ENCODE measurements at regions of chr11 and their contacts with region 1.

Region 1: GRCh38 chr11:125141686-125142535 is 22.6 kb upstream of the PKNOX2 start:
- DNase-seq: no peak
- H3K4me3 ChIP-seq: no peak overlapping the region
- H3K27ac ChIP-seq: no peak overlapping the region
- H3K4me1 ChIP-seq: no peaks in the 10 kb centered on the region
- H3K27me3 ChIP-seq: no peaks in the 10 kb centered on the region
- CTCF ChIP-seq: peak; percentile 81 to 97

Region 2: GRCh38 chr11:124946735-124947141 is 195.2 kb before region 1 on chr11:
- CTCF ChIA-PET with region 1: no interaction called
- dilution Hi-C with region 1: no loop called
- in situ Hi-C with region 1: no loop called
- intact Hi-C with region 1: no loop called
- DNase-seq: peak; percentile 86
- H3K4me3 ChIP-seq: no peak overlapping the region
- H3K27ac ChIP-seq: peak overlapping the region; percentile 80
- H3K4me1 ChIP-seq: peaks cover 18% of the 10 kb centered on the region
- H3K27me3 ChIP-seq: no peaks in the 10 kb centered on the region
- CTCF ChIP-seq: no peak

Region 3: GRCh38 chr11:124970925-124971324 is 171.0 kb before region 1 on chr11:
- CTCF ChIA-PET with region 1: interaction called, 7 read pairs
- dilution Hi-C with region 1: no loop called
- in situ Hi-C with region 1: loop called (anchors 5 to 10 kb)
- intact Hi-C with region 1: loop called (anchors 1 kb)
- DNase-seq: peak; percentile 46
- H3K4me3 ChIP-seq: no peak overlapping the region
- H3K27ac ChIP-seq: no peak overlapping the region
- H3K4me1 ChIP-seq: no peaks in the 10 kb centered on the region
- H3K27me3 ChIP-seq: no peaks in the 10 kb centered on the region
- CTCF ChIP-seq: peak; percentile 10 to 49

Region 4: DNA sequence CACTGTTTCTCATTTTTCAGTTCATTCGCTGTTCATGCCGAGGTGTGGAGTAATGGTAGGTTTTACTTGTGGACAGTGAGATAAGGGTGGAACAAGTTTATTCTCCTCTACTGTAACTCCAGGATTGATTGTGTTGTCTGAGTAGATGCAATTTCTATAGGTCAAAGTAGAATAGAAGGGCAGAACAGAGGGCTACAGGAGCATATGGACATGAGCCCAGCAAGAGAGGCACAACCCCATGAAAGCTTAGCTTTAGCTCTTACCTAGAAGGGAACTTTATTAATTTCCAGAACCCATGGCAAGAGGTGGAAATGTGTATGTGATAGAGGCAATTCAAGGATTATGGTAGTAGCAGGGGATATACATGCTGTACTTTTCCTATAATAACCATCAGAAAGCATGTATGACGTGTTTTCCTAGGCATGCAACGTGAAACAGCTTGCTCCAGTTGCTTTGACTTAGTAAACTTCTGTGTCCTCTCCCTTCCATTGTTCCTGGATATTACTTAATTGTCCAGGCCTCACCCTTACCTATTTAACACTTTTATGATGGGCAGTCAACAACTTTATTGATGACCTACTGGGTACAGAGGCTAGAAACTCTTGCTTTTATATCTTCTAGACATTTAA is 92.6 kb before region 1 on chr11:
- CTCF ChIA-PET with region 1: no interaction called
- dilution Hi-C with region 1: no loop called
- in situ Hi-C with region 1: no loop called
- intact Hi-C with region 1: no loop called
- DNase-seq: no peak
- H3K4me3 ChIP-seq: no peak overlapping the region
- H3K27ac ChIP-seq: no peak overlapping the region
- H3K4me1 ChIP-seq: peaks cover 5% of the 10 kb centered on the region
- H3K27me3 ChIP-seq: no peaks in the 10 kb centered on the region
- CTCF ChIP-seq: no peak

Region 5: DNA sequence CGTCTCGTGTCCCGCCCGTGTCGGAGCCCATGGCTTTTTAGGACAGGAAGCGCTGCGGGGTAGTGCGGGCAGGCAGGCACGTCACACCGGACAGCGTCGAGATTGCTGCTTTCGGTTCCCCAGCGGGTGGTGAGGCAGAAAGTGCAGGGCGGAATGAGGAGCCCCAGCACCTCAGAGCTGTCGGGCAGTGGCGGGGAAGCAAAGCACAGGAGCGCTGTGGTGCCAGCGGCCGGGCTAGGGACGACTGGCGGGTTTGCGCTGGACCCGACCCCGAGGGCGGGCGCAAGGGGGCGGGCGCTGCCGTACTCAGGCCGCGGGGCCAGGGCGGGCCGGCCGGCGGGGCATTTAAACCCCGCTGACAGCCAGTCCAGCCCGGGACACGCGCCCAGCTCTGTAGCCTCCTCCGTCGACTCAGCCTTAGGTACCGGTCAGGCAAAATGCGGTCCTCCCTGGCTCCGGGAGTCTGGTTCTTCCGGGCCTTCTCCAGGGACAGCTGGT is 78.9 kb before region 1 on chr11 and contains the start of gene SLC37A2:
- CTCF ChIA-PET with region 1: interaction called, 6 read pairs
- dilution Hi-C with region 1: no loop called
- in situ Hi-C with region 1: no loop called
- intact Hi-C with region 1: loop called (anchors 5 kb)
- DNase-seq: peak; percentile 81
- H3K4me3 ChIP-seq: peak within 1 kb of the TSS; percentile 59 to 75 (median 63)
- H3K27ac ChIP-seq: peak within 1 kb of the TSS; percentile 69
- H3K4me1 ChIP-seq: peaks cover 8% of the 10 kb centered on the region
- H3K27me3 ChIP-seq: no peaks in the 10 kb centered on the region
- CTCF ChIP-seq: peak in 1 of 2 donors; percentile 19
- total RNA-seq, gene SLC37A2: 34.8 to 85.5 TPM

Region 6: GRCh38 chr11:125404776-125405435 is 263.0 kb after region 1 on chr11:
- CTCF ChIA-PET with region 1: no interaction called
- dilution Hi-C with region 1: no loop called
- in situ Hi-C with region 1: no loop called
- intact Hi-C with region 1: loop called (anchors 5 kb)
- DNase-seq: peak; percentile 27
- H3K4me3 ChIP-seq: no peak overlapping the region
- H3K27ac ChIP-seq: no peak overlapping the region
- H3K4me1 ChIP-seq: peaks cover 11% of the 10 kb centered on the region
- H3K27me3 ChIP-seq: no peaks in the 10 kb centered on the region
- CTCF ChIP-seq: peak; percentile 81 to 96